Heart right ventricle (tissue), 16 donors: ENCODE measurements at regions of chr15 and their contacts with region 1.

Region 1: GRCh38 chr15:93087825-93088199 is 1.2 kb downstream of the RGMA start:
- DNase-seq: peak; percentile 69 to 71
- ATAC-seq: peak; percentile 62 to 79 (median 70)
- H3K4me3 ChIP-seq: peak overlapping the region; percentile 57 to 73 (median 64)
- H3K27ac ChIP-seq: peak overlapping the region; percentile 74 to 92 (median 84)
- H3K4me1 ChIP-seq: peaks cover 3 to 26% (median 17%) of the 10 kb centered on the region in 9 donors
- H3K27me3 ChIP-seq: peaks cover 0 to 83% (median 20%) of the 10 kb centered on the region in 7 donors
- CTCF ChIP-seq: peak; percentile 82 to 92 (median 87)

Region 2: GRCh38 chr15:93152951-93153350 is 65.1 kb after region 1 on chr15:
- intact Hi-C with region 1: loop called in 4 of 10 experiments (anchors 2 to 10 kb)
- DNase-seq: peak; percentile 66 to 85
- ATAC-seq: peak; percentile 82 to 96 (median 92)
- H3K4me3 ChIP-seq: no peak overlapping the region
- H3K27ac ChIP-seq: peak overlapping the region in 2 of 10 donors; percentile 42 to 45
- H3K4me1 ChIP-seq: peaks cover 3 to 33% (median 19%) of the 10 kb centered on the region in 9 donors
- H3K27me3 ChIP-seq: no peaks in the 10 kb centered on the region
- CTCF ChIP-seq: no peak

Region 3: DNA sequence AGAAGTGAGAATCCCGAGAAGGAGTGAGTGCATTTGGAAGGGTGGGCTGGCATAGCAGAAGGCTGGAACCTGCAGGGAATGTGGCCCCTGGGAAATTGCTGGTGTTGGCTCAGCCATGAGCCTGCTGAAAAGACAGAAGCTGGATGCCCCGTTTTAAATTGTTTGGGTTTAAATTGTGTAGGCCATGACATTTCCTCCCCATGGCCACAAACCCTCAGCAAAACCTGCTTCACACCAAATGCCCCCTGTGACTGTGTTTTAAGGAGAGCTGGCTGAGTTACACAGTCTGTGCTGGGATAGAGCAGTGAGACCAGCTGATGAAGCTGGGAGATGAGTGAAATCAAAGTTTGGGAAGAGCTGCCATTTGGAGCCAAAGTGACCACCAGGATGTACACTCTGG is 217.5 kb after region 1 on chr15:
- intact Hi-C with region 1: loop called in 1 of 10 experiments (anchors 2 kb)
- DNase-seq: no peak
- ATAC-seq: no peak
- H3K4me3 ChIP-seq: no peak overlapping the region
- H3K27ac ChIP-seq: no peak overlapping the region
- H3K4me1 ChIP-seq: no peaks in the 10 kb centered on the region
- H3K27me3 ChIP-seq: peaks cover 0 to 7% (median 0%) of the 10 kb centered on the region in 7 donors
- CTCF ChIP-seq: no peak

Region 4: DNA sequence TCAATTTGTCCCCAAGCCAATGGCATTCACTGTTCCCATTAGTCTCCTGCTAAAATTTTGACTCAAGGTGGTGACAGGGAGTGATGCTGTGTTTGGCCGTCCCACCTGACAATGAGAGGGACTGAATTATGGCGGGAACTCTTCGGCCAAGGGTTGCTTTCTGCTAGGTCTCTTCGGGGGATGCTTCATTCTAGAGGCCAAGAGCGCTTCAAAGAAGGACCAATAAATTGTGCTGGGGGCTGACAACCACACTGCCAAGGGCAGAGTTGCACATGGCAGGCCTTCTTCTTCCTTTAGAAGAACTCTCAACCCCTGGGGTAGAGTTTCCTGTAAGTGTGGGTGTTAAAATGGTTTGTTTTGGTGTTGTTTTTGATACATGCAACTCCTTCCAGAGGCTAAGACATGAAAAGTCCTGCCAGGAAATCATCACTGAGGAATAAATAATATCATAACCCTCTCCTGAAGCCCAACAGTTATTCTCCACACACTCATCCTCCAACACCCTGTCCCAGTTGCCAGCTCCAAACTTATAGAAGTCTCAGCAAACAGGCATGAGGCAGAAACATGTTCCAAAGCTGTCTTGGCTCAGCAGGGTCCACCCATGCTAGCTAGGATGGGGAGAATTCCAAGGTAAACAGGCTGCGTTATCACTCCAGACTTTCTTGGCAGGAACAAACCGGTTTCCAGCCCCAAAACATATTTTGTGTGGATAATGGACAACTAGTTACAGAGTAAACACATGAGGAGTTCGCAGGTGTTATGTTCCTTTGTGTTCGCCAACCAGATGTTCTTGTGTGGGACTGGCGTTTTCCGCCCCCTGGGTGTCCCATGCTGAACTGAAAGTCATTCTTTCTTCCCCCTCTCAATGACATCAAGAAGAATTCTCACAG is 397.9 kb after region 1 on chr15:
- intact Hi-C with region 1: loop called in 1 of 10 experiments (anchors 10 kb)
- DNase-seq: peak; percentile 37 to 60
- ATAC-seq: peak; percentile 83 to 90 (median 88)
- H3K4me3 ChIP-seq: no peak overlapping the region
- H3K27ac ChIP-seq: peak overlapping the region in 7 of 10 donors; percentile 11 to 87 (median 71)
- H3K4me1 ChIP-seq: peaks cover 0 to 23% (median 8%) of the 10 kb centered on the region in 9 donors
- H3K27me3 ChIP-seq: no peaks in the 10 kb centered on the region
- CTCF ChIP-seq: peak in 3 of 9 donors; percentile 36 to 37 (median 36)

Region 5: GRCh38 chr15:93543094-93543493 is 455.3 kb after region 1 on chr15:
- intact Hi-C with region 1: no loop called
- DNase-seq: no peak
- ATAC-seq: no peak
- H3K4me3 ChIP-seq: no peak overlapping the region
- H3K27ac ChIP-seq: no peak overlapping the region
- H3K4me1 ChIP-seq: no peaks in the 10 kb centered on the region
- H3K27me3 ChIP-seq: no peaks in the 10 kb centered on the region
- CTCF ChIP-seq: no peak

Region 6: GRCh38 chr15:93997084-93997918 is 909.5 kb after region 1 on chr15:
- intact Hi-C with region 1: loop called in 1 of 10 experiments (anchors 10 kb)
- DNase-seq: no peak
- ATAC-seq: no peak
- H3K4me3 ChIP-seq: no peak overlapping the region
- H3K27ac ChIP-seq: no peak overlapping the region
- H3K4me1 ChIP-seq: peaks cover 0 to 8% (median 0%) of the 10 kb centered on the region in 9 donors
- H3K27me3 ChIP-seq: no peaks in the 10 kb centered on the region
- CTCF ChIP-seq: peak; percentile 33 to 75 (median 60)